T-cell (primary cell): ENCODE measurements at regions of chr15 and their contacts with region 1.

Region 1: DNA sequence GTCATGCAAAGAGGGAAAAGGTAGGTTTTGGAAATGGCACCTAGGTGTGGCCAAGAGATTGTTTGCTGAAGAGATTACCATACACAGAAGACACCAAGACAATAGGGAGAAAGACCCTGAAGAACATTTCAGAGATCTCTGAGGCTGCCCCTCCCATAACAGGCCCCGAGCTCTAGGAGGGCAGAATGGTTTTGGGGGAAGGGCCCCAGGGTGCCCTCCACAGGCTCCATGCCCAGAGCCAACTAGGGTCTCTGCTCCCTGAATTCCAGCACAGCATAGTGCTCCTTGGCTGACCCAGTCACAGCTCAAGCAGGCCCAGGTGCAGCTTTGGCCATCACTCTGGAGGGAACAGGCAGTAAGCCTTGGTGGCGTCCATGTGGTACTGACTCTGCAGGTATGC is 163.9 kb downstream of the RAB11A start:
- DNase-seq: no peak
- ATAC-seq: no peak
- H3K4me3 ChIP-seq: no peak overlapping the region
- H3K4me3 Mint-ChIP-seq: no peak overlapping the region
- H3K27ac ChIP-seq: no peak overlapping the region
- H3K27ac Mint-ChIP-seq: no peak overlapping the region
- H3K4me1 ChIP-seq: no peaks in the 10 kb centered on the region
- H3K4me1 Mint-ChIP-seq: no peaks in the 10 kb centered on the region
- H3K27me3 ChIP-seq: peaks cover 0 to 30% of the 10 kb centered on the region in 2 experiments
- H3K27me3 Mint-ChIP-seq: peaks cover 34 to 36% of the 10 kb centered on the region in 2 donors

Region 2: DNA sequence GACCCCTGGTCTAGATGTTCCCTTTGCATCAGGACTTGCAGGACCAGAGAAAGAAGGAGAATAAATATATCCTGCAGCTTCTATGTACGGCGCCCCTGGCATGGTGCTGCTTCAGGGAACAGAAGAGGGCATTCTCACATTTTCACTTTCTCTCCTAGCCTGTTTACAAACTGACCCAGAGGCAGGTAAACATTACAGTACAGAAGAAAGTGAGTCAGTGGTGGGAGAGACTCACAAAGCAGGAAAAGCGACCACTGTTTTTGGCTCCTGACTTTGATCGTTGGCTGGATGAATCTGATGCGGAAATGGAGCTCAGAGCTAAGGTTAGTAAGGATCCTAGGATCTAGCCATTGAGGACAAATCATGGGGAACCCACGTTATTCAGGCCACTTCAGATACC is 476.6 kb before region 1 on chr15:
- CTCF ChIA-PET with region 1: no interaction called
- POLR2A ChIA-PET with region 1: interaction called in 1 of 2 experiments, 15 read pairs
- DNase-seq: no peak
- ATAC-seq: no peak
- H3K4me3 ChIP-seq: no peak overlapping the region
- H3K4me3 Mint-ChIP-seq: no peak overlapping the region
- H3K27ac ChIP-seq: no peak overlapping the region
- H3K27ac Mint-ChIP-seq: no peak overlapping the region
- H3K4me1 ChIP-seq: no peaks in the 10 kb centered on the region
- H3K4me1 Mint-ChIP-seq: no peaks in the 10 kb centered on the region
- H3K27me3 ChIP-seq: no peaks in the 10 kb centered on the region
- H3K27me3 Mint-ChIP-seq: no peaks in the 10 kb centered on the region